T-cell (primary cell): ENCODE measurements at regions of chr4 and their contacts with region 1.

Region 1: GRCh38 chr4:67765928-67766327 is 11.7 kb upstream of the GNRHR start:
- DNase-seq: no peak
- ATAC-seq: no peak
- H3K4me3 ChIP-seq: no peak overlapping the region
- H3K4me3 Mint-ChIP-seq: no peak overlapping the region
- H3K27ac ChIP-seq: no peak overlapping the region
- H3K27ac Mint-ChIP-seq: no peak overlapping the region
- H3K4me1 ChIP-seq: no peaks in the 10 kb centered on the region
- H3K4me1 Mint-ChIP-seq: peaks cover 0 to 4% (median 3%) of the 10 kb centered on the region in 3 donors
- H3K27me3 ChIP-seq: no peaks in the 10 kb centered on the region
- H3K27me3 Mint-ChIP-seq: no peaks in the 10 kb centered on the region

Region 2: GRCh38 chr4:67750691-67751090 is 15.2 kb before region 1 on chr4:
- CTCF ChIA-PET with region 1: interaction called, 5 to 11 read pairs
- POLR2A ChIA-PET with region 1: no interaction called
- DNase-seq: no peak
- ATAC-seq: no peak
- H3K4me3 ChIP-seq: no peak overlapping the region
- H3K4me3 Mint-ChIP-seq: no peak overlapping the region
- H3K27ac ChIP-seq: no peak overlapping the region
- H3K27ac Mint-ChIP-seq: no peak overlapping the region
- H3K4me1 ChIP-seq: no peaks in the 10 kb centered on the region
- H3K4me1 Mint-ChIP-seq: peaks cover 0 to 3% (median 2%) of the 10 kb centered on the region in 3 donors
- H3K27me3 ChIP-seq: no peaks in the 10 kb centered on the region
- H3K27me3 Mint-ChIP-seq: no peaks in the 10 kb centered on the region

Region 3: GRCh38 chr4:67820903-67821302 is 55.0 kb after region 1 on chr4:
- CTCF ChIA-PET with region 1: no interaction called
- POLR2A ChIA-PET with region 1: no interaction called
- DNase-seq: no peak
- ATAC-seq: no peak
- H3K4me3 ChIP-seq: no peak overlapping the region
- H3K4me3 Mint-ChIP-seq: no peak overlapping the region
- H3K27ac ChIP-seq: no peak overlapping the region
- H3K27ac Mint-ChIP-seq: no peak overlapping the region
- H3K4me1 ChIP-seq: no peaks in the 10 kb centered on the region
- H3K4me1 Mint-ChIP-seq: no peaks in the 10 kb centered on the region
- H3K27me3 ChIP-seq: no peaks in the 10 kb centered on the region
- H3K27me3 Mint-ChIP-seq: no peaks in the 10 kb centered on the region